Left cardiac atrium (tissue), 4 donors: ENCODE measurements at regions of chr7 and their contacts with region 1.

Region 1: GRCh38 chr7:149714050-149714909 is 59.1 kb downstream of the ZNF467 start:
- DNase-seq: peak; percentile 93
- ATAC-seq: peak; percentile 94 to 96

Region 2: GRCh38 chr7:149624419-149625339 is 89.6 kb before region 1 on chr7:
- intact Hi-C with region 1: loop called in 1 of 2 experiments (anchors 10 kb)
- DNase-seq: peak; percentile 96
- ATAC-seq: peak; percentile 97 to 98